ENCODE measurements at regions of chr13 and their contacts with region 1.

Region 1: GRCh38 chr13:23579896-23580683 is 9.9 kb downstream of the TNFRSF19 start:
- DNase-seq: no peak
- H3K4me3 Mint-ChIP-seq: peak overlapping the region; percentile 81
- H3K27ac Mint-ChIP-seq: no peak overlapping the region
- H3K4me1 Mint-ChIP-seq: peaks cover 10% of the 10 kb centered on the region
- H3K27me3 Mint-ChIP-seq: no peaks in the 10 kb centered on the region
- CTCF ChIP-seq: no peak

Region 2: GRCh38 chr13:23621316-23621645 is 41.2 kb after region 1 on chr13:
- CTCF ChIA-PET with region 1: interaction called, 3 read pairs
- intact Hi-C with region 1: loop called (anchors 5 kb)
- DNase-seq: peak; percentile 35
- H3K4me3 Mint-ChIP-seq: no peak overlapping the region
- H3K27ac Mint-ChIP-seq: peak overlapping the region; percentile 47
- H3K4me1 Mint-ChIP-seq: peaks cover 39% of the 10 kb centered on the region
- H3K27me3 Mint-ChIP-seq: no peaks in the 10 kb centered on the region
- CTCF ChIP-seq: no peak

Region 3: DNA sequence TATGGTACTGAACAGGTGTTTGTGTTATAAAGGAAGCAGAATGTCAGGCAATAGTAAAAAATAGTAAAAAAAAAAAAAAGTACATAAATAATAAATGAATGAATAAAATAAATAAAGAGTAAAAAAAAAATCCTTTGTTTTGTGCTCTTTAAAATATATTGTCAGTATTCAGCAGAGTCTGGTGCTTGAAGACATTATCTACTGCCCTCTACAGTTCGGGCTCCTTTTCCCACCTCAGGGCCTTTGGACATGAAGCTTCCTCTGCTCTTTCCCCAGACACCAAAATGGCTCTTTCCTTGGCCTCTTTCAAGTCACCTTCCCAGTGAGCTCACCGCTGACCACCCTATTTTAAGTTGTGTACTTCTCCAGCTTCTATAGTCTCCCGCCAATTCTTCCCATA is 127.6 kb after region 1 on chr13:
- CTCF ChIA-PET with region 1: interaction called, 3 read pairs
- intact Hi-C with region 1: loop called (anchors 10 kb)
- DNase-seq: peak; percentile 13
- H3K4me3 Mint-ChIP-seq: no peak overlapping the region
- H3K27ac Mint-ChIP-seq: no peak overlapping the region
- H3K4me1 Mint-ChIP-seq: no peaks in the 10 kb centered on the region
- H3K27me3 Mint-ChIP-seq: no peaks in the 10 kb centered on the region
- CTCF ChIP-seq: no peak